ENCODE measurements at regions of chr7 and their contacts with region 1.

Region 1: DNA sequence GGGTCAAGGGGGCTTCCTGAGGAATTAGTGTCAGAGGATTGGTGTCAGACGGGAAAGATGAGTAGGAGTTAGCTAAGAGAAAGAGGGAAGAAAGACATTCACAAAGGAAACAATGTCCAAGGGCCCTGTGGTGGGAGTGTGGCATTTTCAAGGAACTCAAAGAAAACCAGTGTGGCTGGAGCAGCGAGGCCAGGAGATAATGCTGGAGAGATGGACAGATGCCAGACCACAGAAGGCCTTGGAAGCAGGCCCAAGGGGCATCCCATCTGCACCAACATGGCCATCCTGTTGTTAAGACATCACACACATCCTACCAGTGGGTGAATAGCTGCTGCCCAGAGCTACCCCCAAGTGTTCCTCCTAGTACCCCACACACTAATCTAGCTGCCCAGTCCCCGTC is 36.1 kb upstream of the CUL1 start:
- DNase-seq: no peak
- ATAC-seq: no peak
- H3K4me3 ChIP-seq: no peak overlapping the region
- H3K4me3 Mint-ChIP-seq: no peak overlapping the region
- H3K27ac ChIP-seq: no peak overlapping the region
- H3K27ac Mint-ChIP-seq: no peak overlapping the region
- H3K4me1 ChIP-seq: no peaks in the 10 kb centered on the region
- H3K4me1 Mint-ChIP-seq: peaks cover under 1 to 4% (median 2%) of the 10 kb centered on the region in 3 donors
- H3K27me3 ChIP-seq: no peaks in the 10 kb centered on the region
- H3K27me3 Mint-ChIP-seq: no peaks in the 10 kb centered on the region

Region 2: GRCh38 chr7:148697256-148698006 is 34.8 kb after region 1 on chr7:
- CTCF ChIA-PET with region 1: no interaction called
- POLR2A ChIA-PET with region 1: interaction called in 1 of 2 experiments, 10 read pairs
- DNase-seq: peak in 16 of 35 experiments; percentile 5 to 50 (median 14)
- ATAC-seq: peak in 1 of 4 experiments; percentile 5
- H3K4me3 ChIP-seq: peak overlapping the region in 1 of 2 donors; percentile 77
- H3K4me3 Mint-ChIP-seq: peak overlapping the region; percentile 78 to 93 (median 86)
- H3K27ac ChIP-seq: peak overlapping the region; percentile 73
- H3K27ac Mint-ChIP-seq: peak overlapping the region; percentile 87 to 93
- H3K4me1 ChIP-seq: peaks cover 14 to 20% of the 10 kb centered on the region in 2 experiments
- H3K4me1 Mint-ChIP-seq: peaks cover 40 to 46% (median 42%) of the 10 kb centered on the region in 3 donors
- H3K27me3 ChIP-seq: no peaks in the 10 kb centered on the region
- H3K27me3 Mint-ChIP-seq: no peaks in the 10 kb centered on the region

Measured in T-cell (primary cell).